Activated CD4-positive, alpha-beta T cell treated with anti-CD3 and anti-CD28 coated beads for 36 hours (primary cell): ENCODE measurements at regions of chr6 and their contacts with region 1.

Region 1: GRCh38 chr6:25942561-25943147 is 12.2 kb upstream of the SLC17A2 start:
- DNase-seq: no peak
- ATAC-seq: peak; percentile 70
- H3K4me3 Mint-ChIP-seq: no peak overlapping the region
- H3K27ac Mint-ChIP-seq: no peak overlapping the region
- H3K4me1 Mint-ChIP-seq: peaks cover 22% of the 10 kb centered on the region
- H3K27me3 Mint-ChIP-seq: peaks cover 4% of the 10 kb centered on the region

Region 2: GRCh38 chr6:25278914-25279747 is 663.5 kb before region 1 on chr6 and contains the start of gene CARMIL1:
- CTCF ChIA-PET with region 1: no interaction called
- POLR2A ChIA-PET with region 1: no interaction called
- intact Hi-C with region 1: loop called in 1 of 2 experiments (anchors 10 kb)
- DNase-seq: peak; percentile 82
- ATAC-seq: peak; percentile 75
- H3K4me3 Mint-ChIP-seq: peak within 1 kb of the TSS; percentile 82
- H3K27ac Mint-ChIP-seq: peak within 1 kb of the TSS; percentile 79
- H3K4me1 Mint-ChIP-seq: peaks cover 38% of the 10 kb centered on the region
- H3K27me3 Mint-ChIP-seq: peaks cover 5% of the 10 kb centered on the region
- total RNA-seq, gene CARMIL1: 4.5 to 4.9 TPM

Region 3: DNA sequence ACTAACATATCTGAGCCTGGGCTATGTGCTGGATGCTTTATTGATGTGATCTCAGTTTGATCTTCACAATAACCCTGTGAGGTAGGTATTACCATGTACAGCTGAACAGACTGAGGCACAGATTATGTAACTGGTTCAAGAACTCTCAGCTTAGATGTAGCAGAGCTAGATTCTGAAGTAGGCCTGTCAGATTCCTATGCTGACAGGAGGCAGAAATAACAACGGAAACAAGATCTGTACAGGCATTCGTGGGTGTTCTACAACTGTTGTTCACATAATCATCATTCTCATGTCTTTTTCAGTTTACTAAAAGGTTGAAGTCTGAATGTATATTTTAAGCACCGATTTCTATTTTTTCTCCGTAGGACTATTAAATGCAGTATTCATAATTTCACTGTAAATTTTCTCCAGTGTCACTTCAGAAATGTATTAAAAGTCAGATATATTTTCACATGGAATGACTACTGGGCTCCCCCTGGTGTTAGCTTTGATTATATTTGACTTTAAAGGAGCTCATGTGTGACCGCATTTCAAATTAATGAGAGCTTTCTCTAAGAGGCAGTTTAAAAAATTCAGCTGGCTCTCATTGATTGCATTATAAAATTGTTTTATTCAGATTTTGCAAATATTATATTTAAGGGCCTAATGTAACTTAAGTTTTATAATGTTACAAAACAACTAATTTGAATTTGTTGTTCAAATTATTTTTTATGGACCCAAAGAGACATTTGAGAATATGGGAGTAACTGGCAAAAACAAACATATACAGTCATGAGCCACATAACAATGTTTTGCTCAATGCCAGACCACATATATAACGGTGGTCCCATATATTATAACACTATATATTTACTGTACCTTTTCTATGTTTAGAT is 224.6 kb before region 1 on chr6:
- CTCF ChIA-PET with region 1: interaction called, 5 read pairs
- POLR2A ChIA-PET with region 1: no interaction called
- intact Hi-C with region 1: loop called (anchors 1 kb)
- DNase-seq: no peak
- ATAC-seq: no peak
- H3K4me3 Mint-ChIP-seq: no peak overlapping the region
- H3K27ac Mint-ChIP-seq: no peak overlapping the region
- H3K4me1 Mint-ChIP-seq: peaks cover 3% of the 10 kb centered on the region
- H3K27me3 Mint-ChIP-seq: peaks cover 13% of the 10 kb centered on the region

Region 4: GRCh38 chr6:25889877-25890853 is 52.5 kb before region 1 on chr6:
- CTCF ChIA-PET with region 1: interaction called, 4 read pairs
- POLR2A ChIA-PET with region 1: no interaction called
- intact Hi-C with region 1: loop called in 1 of 2 experiments (anchors 10 kb)
- DNase-seq: peak; percentile 29
- ATAC-seq: peak; percentile 16
- H3K4me3 Mint-ChIP-seq: no peak overlapping the region
- H3K27ac Mint-ChIP-seq: no peak overlapping the region
- H3K4me1 Mint-ChIP-seq: no peaks in the 10 kb centered on the region
- H3K27me3 Mint-ChIP-seq: peaks cover 4% of the 10 kb centered on the region

Region 5: DNA sequence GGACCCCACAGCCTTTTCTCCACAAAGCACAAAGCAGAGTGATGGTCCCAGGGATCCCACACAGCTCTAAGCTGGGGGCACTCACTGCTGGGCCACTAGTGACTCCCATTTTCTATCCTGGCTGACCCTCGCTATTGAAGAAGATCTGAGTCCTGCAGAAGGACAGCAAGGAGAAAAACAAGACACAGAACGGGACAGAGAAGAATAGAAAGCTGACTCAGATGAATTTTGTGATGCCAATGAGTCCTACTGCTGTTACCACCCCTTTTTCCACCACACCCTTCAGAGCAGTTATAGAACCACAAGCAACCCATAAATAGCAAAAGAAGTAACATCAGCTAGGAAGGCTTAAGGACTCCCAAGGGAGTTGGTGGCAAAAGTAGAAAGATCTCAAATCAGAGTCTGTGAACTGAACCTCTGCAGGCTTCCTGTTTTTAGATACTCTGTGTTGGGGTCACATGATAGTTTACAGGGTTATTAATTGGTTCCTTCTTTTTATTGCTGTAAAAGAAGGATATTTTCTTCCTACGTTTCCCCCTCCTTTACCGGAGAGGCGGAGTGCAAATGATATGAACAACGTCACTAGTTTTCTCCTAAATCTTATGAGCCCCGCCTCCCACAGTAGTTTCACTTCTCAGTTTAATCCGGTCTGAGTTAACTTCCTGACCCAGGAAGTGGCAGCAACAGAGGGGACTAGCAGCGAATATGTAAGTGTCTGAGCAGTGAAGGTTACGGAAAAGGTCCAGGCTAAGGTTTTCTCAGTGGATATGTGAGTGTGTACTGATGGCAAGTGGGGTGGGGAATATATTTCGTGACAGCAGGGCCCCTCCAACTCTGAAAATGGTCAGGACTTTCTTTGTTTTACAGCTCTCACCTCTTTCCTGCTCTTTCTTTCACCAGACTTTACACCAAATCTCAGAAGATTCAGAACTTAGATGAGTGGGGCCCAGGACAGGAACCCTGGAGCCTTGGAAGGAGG is 19.8 kb after region 1 on chr6 and contains the start of gene TRIM38:
- CTCF ChIA-PET with region 1: interaction called, 5 read pairs
- POLR2A ChIA-PET with region 1: no interaction called
- intact Hi-C with region 1: loop called (anchors 1 to 2 kb)
- DNase-seq: peak; percentile 82
- ATAC-seq: peak; percentile 80
- H3K4me3 Mint-ChIP-seq: peak within 1 kb of the TSS; percentile 96
- H3K27ac Mint-ChIP-seq: peak within 1 kb of the TSS; percentile 100
- H3K4me1 Mint-ChIP-seq: peaks cover 74% of the 10 kb centered on the region
- H3K27me3 Mint-ChIP-seq: no peaks in the 10 kb centered on the region
- total RNA-seq, gene TRIM38: 24.9 TPM